Dendritic cell treated with granulocyte-macrophage colony-stimulating factor and Interleukin-4, amounts not matched to agents 40 ng/mL and 50 ng/mL, for 4 days (primary cell): ENCODE measurements at regions of chr14 and their contacts with region 1.

Region 1: DNA sequence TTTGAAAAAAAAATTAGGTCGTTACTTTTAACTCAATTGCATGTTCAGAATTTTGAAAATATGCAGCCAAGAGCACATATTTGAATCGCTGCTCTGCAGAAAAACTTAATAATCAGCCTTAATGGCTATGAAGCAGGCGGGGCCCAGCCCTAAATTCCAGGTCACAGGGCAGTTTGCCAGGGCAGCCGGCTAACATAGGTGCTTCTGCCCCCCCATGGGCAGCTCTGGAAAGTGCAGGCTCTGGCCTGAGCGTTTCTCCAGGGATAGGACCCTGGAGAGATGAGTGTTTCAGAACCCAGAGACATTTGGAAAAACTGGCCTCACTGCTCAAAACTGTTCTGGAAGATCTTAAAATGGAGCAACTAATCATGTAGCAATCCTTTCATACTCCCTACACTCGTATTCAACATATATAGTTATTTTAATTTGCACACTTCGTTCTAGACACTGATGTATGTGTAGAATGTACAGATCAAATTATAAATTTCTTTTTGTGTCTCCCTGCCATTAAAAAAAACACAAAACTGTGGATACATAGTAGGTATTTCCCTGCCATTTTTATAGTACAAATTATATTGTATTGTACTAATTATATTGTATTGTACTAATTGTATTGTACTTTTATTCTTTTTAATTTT is 26.0 kb upstream of the PTGR2 start:
- H3K4me3 Mint-ChIP-seq: no peak overlapping the region
- H3K27ac Mint-ChIP-seq: no peak overlapping the region
- H3K4me1 Mint-ChIP-seq: peaks cover 11% of the 10 kb centered on the region
- H3K27me3 Mint-ChIP-seq: no peaks in the 10 kb centered on the region

Region 2: GRCh38 chr14:73728717-73729330 is 96.8 kb before region 1 on chr14:
- intact Hi-C with region 1: loop called (anchors 1 kb)
- H3K4me3 Mint-ChIP-seq: peak overlapping the region; percentile 14
- H3K27ac Mint-ChIP-seq: peak overlapping the region; percentile 79
- H3K4me1 Mint-ChIP-seq: peaks cover 49% of the 10 kb centered on the region
- H3K27me3 Mint-ChIP-seq: no peaks in the 10 kb centered on the region

Region 3: GRCh38 chr14:73771848-73772638 is 53.6 kb before region 1 on chr14:
- intact Hi-C with region 1: no loop called
- H3K4me3 Mint-ChIP-seq: peak overlapping the region; percentile 31
- H3K27ac Mint-ChIP-seq: peak overlapping the region; percentile 86
- H3K4me1 Mint-ChIP-seq: peaks cover 73% of the 10 kb centered on the region
- H3K27me3 Mint-ChIP-seq: no peaks in the 10 kb centered on the region

Region 4: DNA sequence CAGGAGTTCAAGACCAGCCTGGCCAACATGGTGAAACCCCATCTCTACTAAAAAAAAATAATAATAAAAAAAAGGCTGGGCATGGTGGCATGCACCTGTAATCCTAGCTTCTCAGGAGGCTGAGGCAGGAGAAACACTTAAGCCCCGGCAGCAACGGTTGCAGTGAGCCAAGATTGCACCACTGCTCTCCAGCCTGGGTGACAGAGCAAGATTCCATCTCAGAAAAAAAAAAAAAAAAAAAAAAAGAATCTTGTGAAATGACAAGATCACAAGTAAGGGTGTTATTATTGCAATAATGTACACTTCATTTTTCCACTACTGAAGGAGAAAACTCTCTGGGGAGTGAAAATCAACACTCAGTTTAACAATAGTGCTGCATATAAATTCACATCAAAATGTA is 17.2 kb after region 1 on chr14:
- intact Hi-C with region 1: no loop called
- H3K4me3 Mint-ChIP-seq: no peak overlapping the region
- H3K27ac Mint-ChIP-seq: no peak overlapping the region
- H3K4me1 Mint-ChIP-seq: peaks cover 9% of the 10 kb centered on the region
- H3K27me3 Mint-ChIP-seq: no peaks in the 10 kb centered on the region